Head of caudate nucleus (tissue), 42 donors: ENCODE measurements at regions of chr11 and their contacts with region 1.

Region 1: DNA sequence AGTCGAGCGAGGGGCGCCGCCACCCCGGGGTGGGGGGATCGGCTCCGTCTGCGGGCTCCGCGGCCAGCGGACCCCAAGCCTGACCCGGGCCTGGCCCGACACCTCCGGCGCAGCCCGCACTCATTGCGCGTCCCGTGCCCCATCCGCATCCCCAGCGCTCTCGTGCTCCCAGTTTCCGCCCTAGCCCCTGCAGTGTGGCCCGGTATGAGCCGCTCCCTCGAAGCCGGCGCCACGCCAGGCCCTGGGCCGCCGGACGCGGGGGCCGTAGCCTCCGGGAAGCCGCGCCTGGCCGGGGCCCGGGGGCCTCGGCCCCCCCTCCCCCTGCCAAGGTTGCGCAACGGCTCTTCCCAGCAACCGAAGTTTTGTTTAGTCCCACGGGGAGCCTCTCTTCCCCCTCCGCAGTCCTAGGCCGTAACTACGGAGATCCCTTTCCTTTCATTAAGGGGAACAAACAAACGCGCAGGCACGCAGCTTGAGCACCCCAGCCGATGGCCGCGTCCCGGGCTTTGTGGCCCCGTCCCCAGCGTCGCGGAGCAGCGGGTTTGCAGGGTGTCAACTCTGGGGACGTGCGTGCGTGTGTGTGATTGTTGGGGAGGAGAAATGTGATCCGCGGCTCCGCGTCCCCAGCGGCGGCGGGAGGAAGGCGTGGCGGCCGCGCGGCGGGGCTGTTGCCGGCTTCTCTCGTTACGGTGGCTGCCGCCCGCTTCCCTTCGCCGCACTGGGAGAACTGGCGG is 883 bp downstream of the HIPK3 start:
- DNase-seq: peak; percentile 43 to 89 (median 78)

Region 2: DNA sequence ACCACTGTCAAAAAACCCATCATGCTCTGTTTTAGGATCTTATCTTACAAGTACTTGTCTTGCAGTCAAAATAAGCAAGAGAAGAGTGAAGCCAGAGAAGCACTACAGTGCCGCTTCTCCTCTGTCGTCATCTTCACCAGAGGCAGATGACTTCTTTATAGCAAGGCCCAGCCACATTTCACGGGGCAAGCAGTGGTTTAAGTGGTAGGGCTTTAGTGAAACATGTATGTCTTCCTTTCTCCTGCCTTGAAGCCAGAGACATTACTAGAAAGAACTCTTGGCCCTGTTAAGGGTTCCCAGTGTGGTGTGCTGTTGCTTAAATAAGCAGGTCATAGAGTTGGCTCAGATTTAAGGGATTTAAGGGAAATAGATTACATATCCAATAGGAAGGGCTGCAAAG is 285.3 kb before region 1 on chr11:
- intact Hi-C with region 1: no loop called
- DNase-seq: no peak

Region 3: DNA sequence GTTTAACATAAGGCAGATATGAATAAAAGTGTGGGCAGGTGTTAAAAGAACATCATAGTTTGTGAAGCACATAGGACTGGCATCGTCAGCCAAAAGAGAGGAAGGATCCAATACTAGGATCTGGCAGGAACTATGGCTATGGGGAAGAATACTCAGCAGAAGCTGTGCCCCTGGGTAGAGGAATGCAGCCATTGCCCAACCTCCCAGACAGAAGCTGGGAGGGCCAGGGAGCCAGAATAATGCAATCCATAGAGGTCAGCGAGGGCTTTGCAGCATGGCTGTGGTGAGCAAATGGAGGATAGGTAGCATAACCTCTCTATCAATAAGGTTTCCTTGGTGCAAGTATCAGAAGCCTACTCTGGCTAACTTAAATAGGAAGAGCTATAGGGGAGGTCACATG is 85.1 kb before region 1 on chr11:
- intact Hi-C with region 1: no loop called
- DNase-seq: no peak

Region 4: GRCh38 chr11:33324302-33324985 is 66.4 kb after region 1 on chr11:
- intact Hi-C with region 1: loop called (anchors 5 kb)
- DNase-seq: no peak